ENCODE measurements at regions of chr2 and their contacts with region 1.

Region 1: DNA sequence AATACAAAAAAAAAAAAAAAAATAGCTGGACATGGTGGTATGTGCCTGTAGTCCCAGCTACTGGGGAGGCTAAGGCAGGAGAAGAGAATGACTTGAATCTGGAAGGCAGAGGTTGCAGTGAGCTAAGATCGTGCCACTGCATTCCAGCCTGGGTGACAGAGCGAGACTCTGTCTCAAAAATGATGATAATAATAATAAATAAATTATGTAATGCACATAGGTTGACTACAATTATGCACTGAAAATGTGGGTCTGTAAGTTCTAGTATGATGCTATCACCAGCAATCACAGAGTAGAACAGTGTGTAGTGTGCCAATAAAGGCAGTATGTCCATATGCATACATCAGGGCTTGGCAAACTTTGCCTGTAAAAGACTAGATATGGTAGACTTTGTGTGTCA is 55.6 kb upstream of the MYCN start:
- DNase-seq: no peak
- ATAC-seq: no peak
- H3K4me3 Mint-ChIP-seq: no peak overlapping the region
- H3K27ac Mint-ChIP-seq: no peak overlapping the region
- H3K4me1 Mint-ChIP-seq: no peaks in the 10 kb centered on the region
- H3K27me3 Mint-ChIP-seq: peaks cover 5% of the 10 kb centered on the region

Region 2: GRCh38 chr2:15905986-15906491 is 21.2 kb after region 1 on chr2:
- CTCF ChIA-PET with region 1: interaction called, 3 read pairs
- POLR2A ChIA-PET with region 1: no interaction called
- intact Hi-C with region 1: loop called in 1 of 2 experiments (anchors 2 kb)
- DNase-seq: no peak
- ATAC-seq: no peak
- H3K4me3 Mint-ChIP-seq: no peak overlapping the region
- H3K27ac Mint-ChIP-seq: no peak overlapping the region
- H3K4me1 Mint-ChIP-seq: no peaks in the 10 kb centered on the region
- H3K27me3 Mint-ChIP-seq: peaks cover 6% of the 10 kb centered on the region

Measured in activated CD4-positive, alpha-beta T cell treated with anti-CD3 and anti-CD28 coated beads for 36 hours (primary cell).